ENCODE measurements at regions of chr4 and their contacts with region 1.

Region 1: DNA sequence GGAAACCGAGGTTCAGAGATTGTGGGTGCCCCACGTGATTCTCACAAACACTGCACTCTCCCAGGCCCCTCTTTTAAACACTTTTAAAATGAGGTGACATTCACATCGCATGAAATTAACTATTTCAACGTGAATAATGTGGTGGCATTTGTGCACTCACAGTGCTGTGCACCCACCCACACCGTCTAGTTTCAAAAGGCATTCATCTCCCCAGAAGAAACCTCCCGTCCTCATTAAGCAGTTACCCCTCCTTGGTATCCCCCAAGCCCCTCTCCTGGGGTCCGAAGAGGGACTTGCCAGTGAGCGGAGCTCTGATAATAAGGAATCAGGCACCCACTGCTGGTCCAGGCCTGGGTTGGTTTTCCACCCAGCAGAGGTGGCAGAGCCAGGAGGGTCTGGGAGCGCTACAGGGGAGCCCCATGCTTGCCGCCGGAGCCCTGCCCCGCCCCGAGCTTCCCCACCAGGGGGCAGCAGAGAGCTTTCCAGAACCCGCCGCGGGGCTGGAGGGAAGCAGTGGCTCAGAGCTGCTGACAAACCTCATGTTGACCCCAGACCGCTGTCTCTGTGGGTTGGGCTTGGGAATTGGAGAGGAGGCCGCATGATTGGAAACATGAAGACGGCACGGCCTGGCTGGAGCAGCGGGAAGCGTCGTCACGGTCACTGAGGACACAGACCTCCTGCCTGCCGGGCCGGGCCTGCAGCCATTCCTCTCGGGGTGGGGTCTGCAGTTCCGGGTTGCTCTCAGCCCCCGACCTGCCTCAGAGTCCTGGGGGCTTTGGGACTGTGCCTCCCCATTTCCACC is 27.5 kb upstream of the HTRA3 start:
- DNase-seq: peak; percentile 94
- CTCF ChIP-seq: peak; percentile 87

Region 2: GRCh38 chr4:8403173-8403753 is 161.2 kb after region 1 on chr4:
- in situ Hi-C with region 1: loop called (anchors 10 kb)
- DNase-seq: peak; percentile 80
- CTCF ChIP-seq: peak; percentile 82

Region 3: GRCh38 chr4:8419181-8420041 is 177.3 kb after region 1 on chr4:
- in situ Hi-C with region 1: no loop called
- DNase-seq: peak; percentile 66
- CTCF ChIP-seq: no peak

Measured in GM13977 (cell line).